CD4-positive, alpha-beta memory T cell (primary cell): ENCODE measurements at regions of chr9 and their contacts with region 1.

Region 1: DNA sequence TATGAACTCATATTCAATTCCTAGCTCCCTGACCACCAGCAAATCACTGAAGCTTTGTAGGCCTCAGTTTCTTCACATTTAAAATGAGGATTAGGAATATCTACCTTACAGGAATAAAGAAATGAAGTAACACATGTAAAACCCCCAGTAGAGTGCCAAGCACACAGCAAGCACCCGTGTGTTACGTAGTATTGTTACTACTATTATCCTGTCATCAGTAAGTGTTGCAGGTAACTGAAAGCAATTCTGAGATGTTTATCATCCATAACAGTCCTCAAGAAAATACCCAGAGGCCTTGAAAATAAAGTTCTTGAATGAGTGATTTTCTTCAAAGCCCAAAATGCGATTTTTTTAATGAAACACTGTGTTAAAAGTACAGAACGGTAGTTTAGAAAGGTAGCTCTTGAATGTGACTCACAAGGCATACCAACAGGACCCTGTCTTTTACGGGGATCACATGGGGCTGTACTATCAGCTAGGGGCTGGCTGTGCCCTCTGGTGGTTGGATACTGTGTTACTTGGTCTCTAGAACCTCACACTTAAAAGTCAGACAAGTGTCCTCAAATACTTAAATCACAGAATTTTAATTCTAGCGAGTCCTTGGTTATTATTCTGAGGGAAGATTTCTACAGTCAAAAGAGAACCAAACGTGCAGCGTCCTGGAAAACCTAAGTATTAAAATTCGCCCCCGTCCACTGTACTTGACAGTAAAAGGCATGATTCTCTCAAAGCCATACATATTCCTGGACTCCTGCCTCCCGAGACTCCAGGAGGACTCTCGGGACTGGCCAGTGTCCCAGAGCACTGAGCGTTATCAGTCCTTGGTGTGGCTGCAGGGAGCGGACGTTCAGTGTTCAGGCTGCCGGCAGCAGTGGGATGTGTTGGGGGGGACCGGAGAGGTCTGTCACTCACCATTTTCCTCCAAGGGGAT is 725 bp downstream of the NDUFB6 start:
- DNase-seq: peak; percentile 74 to 89 (median 80)
- H3K4me3 ChIP-seq: peak overlapping the region; percentile 77 to 95
- H3K4me3 Mint-ChIP-seq: peak overlapping the region; percentile 99 to 100 (median 99)
- H3K27ac ChIP-seq: peak overlapping the region; percentile 83
- H3K27ac Mint-ChIP-seq: peak overlapping the region; percentile 96 to 100 (median 99)
- H3K4me1 ChIP-seq: peaks cover 17% of the 10 kb centered on the region
- H3K4me1 Mint-ChIP-seq: peaks cover 19 to 39% (median 26%) of the 10 kb centered on the region in 4 donors
- H3K27me3 ChIP-seq: no peaks in the 10 kb centered on the region
- H3K27me3 Mint-ChIP-seq: peaks cover 0 to 1% of the 10 kb centered on the region in 2 donors

Region 2: DNA sequence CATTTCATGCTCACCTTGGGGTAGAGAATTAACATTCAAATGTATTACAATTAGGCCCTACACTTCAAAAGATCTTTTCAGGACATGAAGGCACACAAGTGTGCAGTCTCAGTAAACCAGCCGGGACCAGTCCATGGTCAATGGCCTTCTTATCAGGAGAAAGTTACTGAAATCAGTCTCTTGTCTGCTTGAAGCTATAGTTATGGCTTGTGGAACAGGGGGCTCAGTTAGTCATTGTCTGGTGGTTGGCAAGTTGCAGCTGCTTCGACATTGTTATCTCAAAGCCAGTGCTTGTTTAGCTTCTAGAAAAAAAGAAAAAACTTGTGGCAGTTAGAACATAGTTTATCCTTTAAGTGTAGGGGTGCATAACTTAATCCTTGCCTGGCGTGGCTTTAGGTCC is 400.9 kb before region 1 on chr9:
- CTCF ChIA-PET with region 1: no interaction called
- POLR2A ChIA-PET with region 1: no interaction called
- intact Hi-C with region 1: no loop called
- DNase-seq: no peak
- H3K4me3 ChIP-seq: no peak overlapping the region
- H3K4me3 Mint-ChIP-seq: no peak overlapping the region
- H3K27ac ChIP-seq: no peak overlapping the region
- H3K27ac Mint-ChIP-seq: no peak overlapping the region
- H3K4me1 ChIP-seq: no peaks in the 10 kb centered on the region
- H3K4me1 Mint-ChIP-seq: no peaks in the 10 kb centered on the region
- H3K27me3 ChIP-seq: no peaks in the 10 kb centered on the region
- H3K27me3 Mint-ChIP-seq: no peaks in the 10 kb centered on the region

Region 3: DNA sequence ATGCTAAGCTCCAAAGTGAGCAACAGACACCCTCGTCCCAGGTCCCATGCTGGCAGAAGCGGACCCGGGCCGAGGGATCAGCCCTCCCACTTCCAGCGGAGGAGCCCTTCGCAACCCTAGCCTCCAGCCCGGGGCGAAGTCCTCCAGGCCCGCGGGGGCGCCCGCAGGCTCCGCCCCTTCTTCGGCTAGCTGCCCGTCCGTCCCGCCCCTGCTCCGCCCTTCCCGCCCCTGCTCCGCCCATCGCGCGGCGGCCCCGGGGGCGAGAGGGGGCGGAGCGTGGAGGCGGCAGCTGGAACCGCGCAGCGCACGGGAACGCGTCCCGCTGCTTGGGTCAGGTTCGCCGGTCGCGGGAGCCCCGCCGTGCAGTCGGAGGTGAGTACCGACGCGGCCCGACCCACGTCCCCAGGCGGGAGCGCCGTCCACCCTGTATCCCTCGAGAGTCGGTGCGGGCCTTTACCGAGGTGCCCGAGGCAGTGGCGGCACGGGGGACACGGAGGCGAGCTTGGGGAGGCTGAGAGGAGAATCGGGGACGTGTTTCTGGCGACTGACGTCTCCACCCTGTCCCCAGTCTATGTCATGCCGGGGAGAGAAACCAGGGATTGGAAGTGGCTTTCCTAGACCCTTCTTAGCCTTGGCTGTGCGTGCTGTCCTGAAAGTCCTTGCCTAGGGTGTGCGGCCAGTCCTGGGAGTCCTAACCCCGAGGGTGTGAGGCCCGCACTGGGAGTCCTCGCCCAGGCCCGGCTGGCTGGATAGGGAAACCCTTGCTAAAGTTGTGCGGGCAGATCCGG is 187.7 kb before region 1 on chr9 and contains the start of gene ACO1:
- CTCF ChIA-PET with region 1: interaction called, 659 read pairs
- POLR2A ChIA-PET with region 1: interaction called, 48 read pairs
- intact Hi-C with region 1: loop called (anchors 1 kb)
- DNase-seq: peak; percentile 77 to 89 (median 84)
- H3K4me3 ChIP-seq: peak within 1 kb of the TSS; percentile 79 to 91
- H3K4me3 Mint-ChIP-seq: peak within 1 kb of the TSS; percentile 81 to 90 (median 88)
- H3K27ac ChIP-seq: peak within 1 kb of the TSS; percentile 55
- H3K27ac Mint-ChIP-seq: peak within 1 kb of the TSS in 6 of 7 donors; percentile 3 to 83 (median 58)
- H3K4me1 ChIP-seq: peaks cover 20% of the 10 kb centered on the region
- H3K4me1 Mint-ChIP-seq: peaks cover 12 to 20% (median 17%) of the 10 kb centered on the region in 4 donors
- H3K27me3 ChIP-seq: no peaks in the 10 kb centered on the region
- H3K27me3 Mint-ChIP-seq: peaks cover 3 to 7% of the 10 kb centered on the region in 2 donors
- total RNA-seq, gene ACO1: 7.9 to 9.1 TPM

Region 4: DNA sequence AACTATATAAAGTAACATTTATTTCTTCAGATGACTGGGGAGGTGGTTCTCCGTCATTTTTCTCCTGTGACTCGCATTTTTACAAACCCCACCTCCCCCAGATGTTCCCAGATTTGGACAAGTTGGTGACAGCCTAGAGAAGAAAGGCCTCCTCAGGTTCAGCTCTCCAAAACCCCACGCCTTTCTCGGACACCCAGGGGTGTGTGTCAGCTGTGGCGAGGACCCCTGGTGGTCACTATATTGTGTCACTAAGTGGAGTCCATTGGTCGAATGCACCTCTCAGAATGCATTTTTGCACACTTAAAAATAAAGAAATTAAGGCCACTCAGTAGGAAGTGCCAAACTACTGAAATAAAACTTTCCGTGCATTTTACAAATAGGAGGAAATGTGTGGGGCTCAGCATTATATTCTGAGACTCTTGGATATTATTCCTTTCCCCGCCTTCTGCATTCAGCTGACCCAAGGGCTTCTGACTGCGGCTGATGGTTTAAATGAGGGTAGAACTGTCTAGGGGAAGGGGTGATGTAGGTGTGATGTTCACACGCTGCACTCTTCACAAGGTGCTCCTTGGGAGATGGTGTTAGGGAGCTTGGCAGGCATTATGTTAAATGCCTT is 140.2 kb before region 1 on chr9:
- CTCF ChIA-PET with region 1: interaction called, 4 read pairs
- POLR2A ChIA-PET with region 1: no interaction called
- intact Hi-C with region 1: loop called (anchors 2 kb)
- DNase-seq: peak in 4 of 5 donors; percentile 9 to 15 (median 12)
- H3K4me3 ChIP-seq: no peak overlapping the region
- H3K4me3 Mint-ChIP-seq: no peak overlapping the region
- H3K27ac ChIP-seq: no peak overlapping the region
- H3K27ac Mint-ChIP-seq: no peak overlapping the region
- H3K4me1 ChIP-seq: no peaks in the 10 kb centered on the region
- H3K4me1 Mint-ChIP-seq: peaks cover 0 to 4% (median 2%) of the 10 kb centered on the region in 4 donors
- H3K27me3 ChIP-seq: no peaks in the 10 kb centered on the region
- H3K27me3 Mint-ChIP-seq: no peaks in the 10 kb centered on the region

Region 5: GRCh38 chr9:32550562-32551433 is 21.4 kb before region 1 on chr9:
- CTCF ChIA-PET with region 1: interaction called, 72 read pairs
- POLR2A ChIA-PET with region 1: interaction called, 69 read pairs
- intact Hi-C with region 1: loop called (anchors 1 kb)
- DNase-seq: peak; percentile 95 to 99 (median 95)
- H3K4me3 ChIP-seq: peak overlapping the region; percentile 93 to 98
- H3K4me3 Mint-ChIP-seq: peak overlapping the region; percentile 92 to 99 (median 97)
- H3K27ac ChIP-seq: peak overlapping the region; percentile 88
- H3K27ac Mint-ChIP-seq: peak overlapping the region; percentile 92 to 100 (median 98)
- H3K4me1 ChIP-seq: peaks cover 47% of the 10 kb centered on the region
- H3K4me1 Mint-ChIP-seq: peaks cover 28 to 66% (median 49%) of the 10 kb centered on the region in 4 donors
- H3K27me3 ChIP-seq: no peaks in the 10 kb centered on the region
- H3K27me3 Mint-ChIP-seq: no peaks in the 10 kb centered on the region

Region 6: DNA sequence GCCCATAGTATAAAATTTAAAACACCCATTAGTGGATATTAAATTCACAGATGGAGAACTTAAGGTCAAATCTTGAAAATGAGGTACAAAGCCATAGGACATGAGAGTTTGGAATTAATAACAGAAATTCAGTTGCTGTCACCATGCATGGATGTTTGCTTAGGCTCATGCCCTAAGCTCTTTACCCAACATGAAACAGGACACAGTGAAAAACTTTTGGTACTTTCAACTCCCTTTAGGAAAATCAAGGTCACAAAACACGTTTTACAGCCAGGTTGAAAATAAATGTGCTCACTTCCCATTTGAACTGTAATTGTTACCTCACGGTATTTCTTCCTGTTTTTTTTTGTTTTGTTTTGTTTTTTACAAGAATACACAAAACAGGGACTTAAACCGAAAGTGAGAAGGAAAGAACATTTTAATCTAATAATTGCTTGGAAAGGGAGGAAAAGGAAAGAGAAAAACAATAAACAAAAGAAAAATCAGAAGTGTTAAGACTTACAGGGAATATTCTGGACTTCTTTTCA is 13.8 kb before region 1 on chr9:
- CTCF ChIA-PET with region 1: interaction called, 13 read pairs
- POLR2A ChIA-PET with region 1: interaction called, 5 read pairs
- intact Hi-C with region 1: no loop called
- DNase-seq: no peak
- H3K4me3 ChIP-seq: no peak overlapping the region
- H3K4me3 Mint-ChIP-seq: no peak overlapping the region
- H3K27ac ChIP-seq: no peak overlapping the region
- H3K27ac Mint-ChIP-seq: peak overlapping the region in 5 of 7 donors; percentile 14 to 79 (median 75)
- H3K4me1 ChIP-seq: peaks cover 9% of the 10 kb centered on the region
- H3K4me1 Mint-ChIP-seq: peaks cover 25 to 33% (median 26%) of the 10 kb centered on the region in 4 donors
- H3K27me3 ChIP-seq: no peaks in the 10 kb centered on the region
- H3K27me3 Mint-ChIP-seq: no peaks in the 10 kb centered on the region

Region 7: GRCh38 chr9:32677931-32678330 is 105.7 kb after region 1 on chr9:
- CTCF ChIA-PET with region 1: no interaction called
- POLR2A ChIA-PET with region 1: no interaction called
- intact Hi-C with region 1: no loop called
- DNase-seq: no peak
- H3K4me3 ChIP-seq: no peak overlapping the region
- H3K4me3 Mint-ChIP-seq: no peak overlapping the region
- H3K27ac ChIP-seq: no peak overlapping the region
- H3K27ac Mint-ChIP-seq: no peak overlapping the region
- H3K4me1 ChIP-seq: no peaks in the 10 kb centered on the region
- H3K4me1 Mint-ChIP-seq: no peaks in the 10 kb centered on the region
- H3K27me3 ChIP-seq: no peaks in the 10 kb centered on the region
- H3K27me3 Mint-ChIP-seq: peaks cover 3 to 10% of the 10 kb centered on the region in 2 donors